Activated T-helper 2 cell treated with anti-CD3 and anti-CD28 coated beads, Interferon-gamma antibody, Interleukin-2, Interleukin-4, amounts not matched to agents 10 μg/mL and 5 μg/mL and 100 μg/mL, durations not matched to agents 14 hours and 24 hours and 36 hours (primary cell): ENCODE measurements at regions of chr3 and their contacts with region 1.

Region 1: DNA sequence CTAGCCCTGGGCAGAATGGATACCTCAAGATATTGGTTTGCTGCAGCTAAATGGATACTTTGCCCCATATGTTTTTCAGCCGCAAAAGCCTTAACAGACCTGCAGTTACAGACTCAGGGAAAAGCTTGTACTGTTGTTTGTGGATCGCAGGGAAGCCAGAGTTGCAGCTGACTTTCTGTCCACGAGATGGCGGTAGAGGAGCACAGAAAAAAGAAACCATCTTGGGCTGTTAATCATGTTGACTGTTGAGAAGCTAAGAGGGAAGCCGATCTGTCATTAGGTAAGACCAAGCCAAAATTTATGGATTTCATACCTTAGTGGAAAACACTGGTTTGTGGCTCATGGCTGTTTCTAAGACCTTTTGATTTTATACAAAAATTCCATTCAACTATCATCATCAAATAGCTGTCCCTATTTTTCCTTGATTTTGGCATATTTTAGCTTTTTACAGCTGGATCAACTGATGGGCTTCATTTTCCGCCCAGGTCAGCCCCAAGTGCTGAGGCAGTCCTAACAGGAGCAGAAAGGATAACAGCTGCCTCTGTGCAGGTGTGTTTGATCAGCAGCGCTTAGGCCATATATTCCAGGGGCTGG is 205.7 kb upstream of the ZPLD1 start:
- DNase-seq: peak; percentile 62
- H3K4me3 Mint-ChIP-seq: no peak overlapping the region
- H3K27ac Mint-ChIP-seq: no peak overlapping the region
- H3K4me1 Mint-ChIP-seq: peaks cover 23% of the 10 kb centered on the region
- H3K27me3 Mint-ChIP-seq: peaks cover 23% of the 10 kb centered on the region

Region 2: DNA sequence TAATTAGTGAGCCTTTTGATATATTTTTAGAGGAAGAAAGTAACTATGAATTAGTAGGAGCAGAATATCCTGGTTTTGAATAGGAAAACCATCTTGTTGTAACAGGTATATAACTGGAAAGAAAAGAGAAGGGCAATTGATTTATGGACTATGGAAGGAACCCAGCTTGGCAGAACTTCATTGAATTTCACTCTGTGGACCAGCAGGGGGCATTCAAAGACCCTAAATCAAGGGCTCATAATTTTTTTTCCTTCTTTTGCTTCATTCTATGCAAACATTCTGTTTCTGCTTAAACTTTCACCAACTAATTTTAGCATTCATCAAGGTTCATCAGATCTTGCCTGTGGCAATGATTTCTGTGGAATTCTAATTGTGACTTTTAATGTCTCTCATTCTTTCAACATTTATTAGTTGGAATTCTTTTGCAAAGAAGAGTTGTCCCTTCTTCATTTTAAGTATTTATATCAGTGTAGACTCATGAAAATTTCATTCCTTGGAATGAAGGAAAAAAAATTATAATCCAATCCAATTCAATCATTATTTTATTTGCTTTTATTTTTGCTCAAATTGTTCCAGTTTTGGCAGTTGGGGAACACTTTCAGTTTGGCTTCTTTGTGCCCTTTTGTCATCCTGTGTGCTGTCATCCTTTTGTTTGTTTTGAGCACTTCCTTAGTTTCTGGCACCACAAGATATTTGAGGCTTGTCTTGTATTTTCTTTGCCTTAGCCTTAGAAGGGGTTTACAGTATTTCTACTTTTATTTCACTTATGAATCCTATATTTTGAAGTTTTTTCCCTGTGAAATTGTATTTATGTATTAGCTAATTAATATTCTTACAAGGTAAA is 419.8 kb before region 1 on chr3:
- intact Hi-C with region 1: loop called (anchors 1 kb)
- DNase-seq: no peak
- H3K4me3 Mint-ChIP-seq: no peak overlapping the region
- H3K27ac Mint-ChIP-seq: peak overlapping the region; percentile 48
- H3K4me1 Mint-ChIP-seq: peaks cover 51% of the 10 kb centered on the region
- H3K27me3 Mint-ChIP-seq: no peaks in the 10 kb centered on the region

Region 3: GRCh38 chr3:102189956-102190723 is 39.0 kb before region 1 on chr3:
- intact Hi-C with region 1: no loop called
- DNase-seq: no peak
- H3K4me3 Mint-ChIP-seq: no peak overlapping the region
- H3K27ac Mint-ChIP-seq: no peak overlapping the region
- H3K4me1 Mint-ChIP-seq: peaks cover 17% of the 10 kb centered on the region
- H3K27me3 Mint-ChIP-seq: no peaks in the 10 kb centered on the region

Region 4: DNA sequence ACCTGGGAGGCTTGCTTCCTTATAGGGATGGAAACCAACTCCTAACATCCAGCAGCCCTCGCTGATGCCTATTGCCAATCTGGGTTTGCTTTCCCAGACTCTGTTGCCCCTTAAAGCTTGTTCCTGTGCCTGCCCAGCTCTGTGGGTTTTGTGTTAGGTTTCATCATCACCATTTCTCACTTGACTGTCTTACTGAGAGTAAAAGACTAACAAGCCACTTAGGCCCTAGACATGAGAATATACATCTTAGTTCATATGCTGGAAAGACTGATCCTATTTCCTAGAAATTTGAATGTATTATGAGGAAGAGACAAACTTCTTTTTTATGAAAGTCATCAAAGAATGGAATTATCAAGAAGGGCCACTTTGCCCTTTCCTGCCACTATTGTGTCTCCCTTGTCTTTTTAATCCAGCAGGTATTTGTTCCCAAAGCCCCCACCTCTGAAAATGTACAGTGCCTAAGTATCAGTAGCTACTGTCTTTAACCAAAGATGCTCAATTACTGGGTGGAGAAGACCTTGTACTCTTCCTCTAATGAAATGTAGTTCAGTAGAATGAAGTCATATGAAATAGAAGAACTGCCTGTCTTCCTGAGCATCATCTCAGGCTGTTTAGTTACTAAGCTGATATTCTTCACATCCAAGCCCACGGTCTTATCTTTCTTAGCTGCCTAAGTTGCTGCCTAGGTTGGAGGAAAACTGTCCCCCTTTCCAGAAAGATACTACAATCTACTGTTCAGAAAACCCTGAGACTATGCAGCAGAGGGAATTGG is 145.9 kb after region 1 on chr3:
- intact Hi-C with region 1: loop called (anchors 5 kb)
- DNase-seq: no peak
- H3K4me3 Mint-ChIP-seq: no peak overlapping the region
- H3K27ac Mint-ChIP-seq: no peak overlapping the region
- H3K4me1 Mint-ChIP-seq: no peaks in the 10 kb centered on the region
- H3K27me3 Mint-ChIP-seq: no peaks in the 10 kb centered on the region

Region 5: DNA sequence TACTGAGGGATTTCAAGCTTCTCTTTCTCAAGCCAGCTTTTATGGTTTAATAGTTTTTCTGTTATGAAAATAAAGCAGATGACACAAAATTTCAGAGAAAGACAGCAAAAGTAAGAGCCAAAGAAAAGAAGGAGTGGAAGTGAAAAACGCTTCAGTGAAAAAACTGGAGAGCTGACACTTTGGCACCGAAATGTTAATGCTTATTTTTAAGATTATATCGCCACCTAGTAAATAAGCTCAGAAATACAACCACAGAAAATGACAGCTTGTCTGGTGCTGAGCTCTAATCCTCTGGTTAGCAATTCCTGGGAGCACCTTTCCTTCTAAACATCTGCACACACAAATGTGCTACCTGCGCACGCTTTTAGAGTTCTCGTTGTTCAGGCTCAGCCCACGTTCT is 307.3 kb after region 1 on chr3:
- intact Hi-C with region 1: loop called (anchors 1 kb)
- DNase-seq: no peak
- H3K4me3 Mint-ChIP-seq: no peak overlapping the region
- H3K27ac Mint-ChIP-seq: no peak overlapping the region
- H3K4me1 Mint-ChIP-seq: peaks cover 3% of the 10 kb centered on the region
- H3K27me3 Mint-ChIP-seq: no peaks in the 10 kb centered on the region